Sigmoid colon (tissue), 7 donors: ENCODE measurements at regions of chr2 and their contacts with region 1.

Region 1: DNA sequence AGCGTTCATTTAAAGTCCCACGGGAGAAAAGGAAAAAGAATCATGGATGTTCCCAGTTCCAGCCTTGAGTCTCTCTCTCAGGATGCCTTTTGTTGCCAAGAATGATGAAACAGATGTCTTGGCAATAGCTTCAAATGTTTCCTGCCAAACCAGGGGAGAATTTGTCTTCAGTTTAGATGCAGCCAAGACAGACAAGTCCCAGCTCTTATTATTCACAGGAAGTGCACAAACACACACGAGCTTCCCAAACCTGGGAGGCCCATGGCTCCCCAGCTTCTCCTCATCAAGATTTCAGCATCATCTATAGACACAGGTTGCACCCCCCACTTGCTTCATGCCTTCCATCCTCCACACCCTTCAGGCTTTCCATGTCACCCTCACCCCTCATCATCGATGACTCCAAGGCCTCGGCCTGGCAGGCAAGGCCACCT is 45.9 kb downstream of the HS1BP3 start:
- DNase-seq: peak; percentile 88
- H3K4me3 ChIP-seq: no peak overlapping the region
- H3K27ac ChIP-seq: peak overlapping the region; percentile 80 to 89 (median 84)
- H3K4me1 ChIP-seq: peaks cover 0 to 52% (median 45%) of the 10 kb centered on the region in 4 donors
- H3K27me3 ChIP-seq: no peaks in the 10 kb centered on the region
- CTCF ChIP-seq: no peak
- EP300 ChIP-seq: peak in 3 of 4 donors; percentile 27 to 69 (median 34)
- POLR2A ChIP-seq: no peak

Region 2: GRCh38 chr2:20575935-20576597 is 28.9 kb before region 1 on chr2:
- intact Hi-C with region 1: loop called (anchors 1 kb)
- DNase-seq: no peak
- H3K4me3 ChIP-seq: no peak overlapping the region
- H3K27ac ChIP-seq: peak overlapping the region in 1 of 4 donors; percentile 63
- H3K4me1 ChIP-seq: peaks cover 0 to 43% (median 38%) of the 10 kb centered on the region in 4 donors
- H3K27me3 ChIP-seq: no peaks in the 10 kb centered on the region
- CTCF ChIP-seq: no peak
- EP300 ChIP-seq: no peak
- POLR2A ChIP-seq: no peak